Pancreas (tissue), 10 donors: ENCODE measurements at regions of chr1 and their contacts with region 1.

Region 1: DNA sequence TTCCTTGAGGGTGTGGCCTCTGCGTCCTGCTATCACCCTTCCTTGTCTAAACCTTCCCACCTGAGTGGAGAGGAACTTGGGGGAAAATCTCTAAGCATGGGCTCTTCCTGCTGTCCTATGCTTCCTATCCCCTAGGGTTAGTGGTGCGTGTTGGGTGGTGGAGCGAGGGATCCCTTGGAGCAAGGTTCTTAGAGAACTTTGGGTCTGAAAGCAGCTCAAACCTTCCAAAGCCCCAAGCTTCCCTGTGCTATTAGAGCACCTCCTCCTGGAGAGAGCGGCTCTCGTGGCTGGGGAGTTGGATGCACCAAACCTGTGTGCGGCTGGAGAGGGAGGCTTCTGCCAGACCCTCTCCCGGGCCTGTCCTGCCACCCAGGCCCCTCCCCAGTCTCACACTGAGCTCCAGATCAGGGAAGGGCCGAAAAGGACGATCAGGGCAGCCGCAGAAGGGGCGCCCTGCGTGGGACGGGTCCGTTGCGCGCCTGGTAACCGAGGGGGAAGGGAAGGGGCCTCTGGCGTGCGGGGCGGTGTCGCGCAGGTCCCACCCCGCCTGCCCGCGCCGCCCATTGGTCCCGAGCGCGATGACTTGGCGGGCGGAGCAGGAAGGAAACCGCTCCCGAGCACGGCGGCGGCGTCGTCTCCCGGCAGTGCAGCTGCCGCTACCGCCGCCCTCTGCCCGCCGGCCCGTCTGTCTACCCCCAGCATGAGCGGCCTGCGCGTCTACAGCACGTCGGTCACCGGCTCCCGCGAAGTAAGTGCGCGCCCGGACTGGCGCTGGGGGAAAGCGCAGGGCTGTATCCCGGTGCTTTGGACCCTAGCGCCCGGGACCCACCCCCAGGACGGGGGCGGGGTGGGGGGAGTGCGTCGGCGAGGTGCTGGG is at the start of gene SH3BGRL3:
- DNase-seq: peak; percentile 88 to 95 (median 90)
- ATAC-seq: peak; percentile 84 to 87 (median 86)
- H3K4me3 ChIP-seq: peak within 1 kb of the TSS; percentile 68 to 100 (median 80)
- H3K27ac ChIP-seq: peak within 1 kb of the TSS; percentile 85 to 95 (median 93)
- H3K4me1 ChIP-seq: peaks cover 33 to 57% (median 36%) of the 10 kb centered on the region in 3 donors
- H3K27me3 ChIP-seq: no peaks in the 10 kb centered on the region
- CTCF ChIP-seq: no peak
- total RNA-seq, gene SH3BGRL3: 29.1 to 84.2 (median 48.8) TPM

Region 2: GRCh38 chr1:26083246-26083645 is 196.4 kb before region 1 on chr1:
- intact Hi-C with region 1: no loop called
- DNase-seq: no peak
- ATAC-seq: peak in 1 of 4 donors; percentile 33
- H3K4me3 ChIP-seq: no peak overlapping the region
- H3K27ac ChIP-seq: no peak overlapping the region
- H3K4me1 ChIP-seq: peaks cover 0 to 16% (median 7%) of the 10 kb centered on the region in 3 donors
- H3K27me3 ChIP-seq: no peaks in the 10 kb centered on the region
- CTCF ChIP-seq: no peak

Region 3: DNA sequence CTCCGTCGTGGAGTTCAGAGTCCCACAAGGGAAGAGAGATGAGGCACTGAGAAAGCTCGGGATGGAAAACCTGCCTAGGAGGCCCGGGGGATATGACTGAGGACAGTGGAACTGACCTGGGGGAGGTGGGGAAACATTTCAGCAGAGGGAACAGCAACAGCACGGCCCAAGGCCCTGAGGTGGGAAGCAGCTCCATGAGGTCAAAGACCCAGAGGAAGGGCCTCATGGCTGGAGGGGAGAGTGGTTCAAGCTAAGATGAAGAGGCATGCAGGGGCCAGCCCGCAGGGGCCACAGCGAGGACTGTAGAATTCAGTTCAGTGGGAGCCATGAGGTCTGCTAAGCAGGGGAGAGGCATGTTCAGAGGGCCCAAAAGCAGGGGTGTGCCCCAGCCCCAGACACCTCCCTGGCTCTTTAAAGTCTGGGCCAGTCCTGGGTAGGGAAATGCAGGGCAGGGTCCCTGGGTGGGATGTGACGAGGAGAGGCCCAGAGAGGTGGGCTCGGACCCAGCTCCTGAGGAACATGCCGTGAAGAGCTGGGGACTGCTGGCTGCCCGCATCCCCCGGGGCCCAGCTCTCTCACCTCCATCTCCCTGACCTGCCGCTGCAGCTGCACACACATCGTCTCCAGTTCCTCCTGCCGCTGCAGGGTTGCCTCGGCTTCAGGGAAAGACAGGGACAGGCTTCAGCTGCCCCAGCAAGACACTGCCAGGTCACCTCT is 16.8 kb after region 1 on chr1:
- intact Hi-C with region 1: loop called in 1 of 3 experiments (anchors 2 kb)
- DNase-seq: no peak
- ATAC-seq: no peak
- H3K4me3 ChIP-seq: no peak overlapping the region
- H3K27ac ChIP-seq: no peak overlapping the region
- H3K4me1 ChIP-seq: no peaks in the 10 kb centered on the region
- H3K27me3 ChIP-seq: no peaks in the 10 kb centered on the region
- CTCF ChIP-seq: no peak

Region 4: GRCh38 chr1:26321315-26322041 is 41.8 kb after region 1 on chr1:
- intact Hi-C with region 1: loop called in 2 of 3 experiments (anchors 5 kb)
- DNase-seq: peak; percentile 78 to 98 (median 92)
- ATAC-seq: peak; percentile 93 to 97 (median 96)
- H3K4me3 ChIP-seq: no peak overlapping the region
- H3K27ac ChIP-seq: no peak overlapping the region
- H3K4me1 ChIP-seq: no peaks in the 10 kb centered on the region
- H3K27me3 ChIP-seq: no peaks in the 10 kb centered on the region
- CTCF ChIP-seq: peak; percentile 69 to 80 (median 74)